Activated T-helper 2 cell treated with anti-CD3 and anti-CD28 coated beads, Interferon-gamma antibody, Interleukin-2, Interleukin-4, amounts not matched to agents 10 μg/mL and 5 μg/mL and 100 μg/mL, durations not matched to agents 14 hours and 24 hours and 36 hours (primary cell): ENCODE measurements at regions of chr3 and their contacts with region 1.

Region 1: DNA sequence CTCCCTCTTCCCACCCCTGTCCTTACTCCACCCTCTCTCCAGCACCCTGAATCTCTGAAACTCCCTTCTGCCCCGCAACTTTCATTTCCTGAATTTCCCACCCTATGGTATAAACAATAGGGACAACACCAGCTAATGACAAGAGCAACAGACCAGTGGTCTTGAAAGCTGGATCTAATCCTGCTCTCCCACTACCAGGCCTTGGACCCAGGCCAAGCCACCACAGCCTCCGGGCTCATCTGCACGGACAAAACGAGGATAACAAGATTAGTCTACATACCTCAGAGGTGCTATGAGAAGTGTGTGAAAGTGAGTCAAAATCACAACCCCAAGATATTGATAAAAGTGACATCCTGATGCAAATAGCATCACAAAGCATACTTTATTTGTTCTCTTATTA is 128.6 kb downstream of the ERC2 start:
- DNase-seq: no peak
- H3K4me3 Mint-ChIP-seq: no peak overlapping the region
- H3K27ac Mint-ChIP-seq: no peak overlapping the region
- H3K4me1 Mint-ChIP-seq: no peaks in the 10 kb centered on the region
- H3K27me3 Mint-ChIP-seq: peaks cover 10% of the 10 kb centered on the region

Region 2: DNA sequence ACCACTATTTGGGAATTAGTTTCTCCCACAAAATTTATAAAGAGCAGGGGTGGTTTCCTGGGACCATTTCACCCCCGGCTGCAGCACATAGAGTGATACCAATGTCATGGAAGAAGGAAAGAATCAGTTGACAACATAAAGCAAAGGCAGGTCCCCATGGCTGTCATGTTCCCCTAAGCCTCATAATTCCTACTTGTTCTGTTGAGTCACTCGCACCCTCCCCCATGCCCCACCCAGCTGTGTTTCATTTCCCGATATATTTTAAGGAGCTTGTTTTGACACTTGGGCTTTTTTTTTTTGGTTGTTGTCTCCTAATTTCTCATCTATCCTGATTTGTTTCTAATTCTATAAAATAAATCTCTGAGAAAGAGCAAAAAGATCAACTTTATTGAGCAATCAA is 103.7 kb after region 1 on chr3:
- intact Hi-C with region 1: loop called (anchors 2 kb)
- DNase-seq: no peak
- H3K4me3 Mint-ChIP-seq: no peak overlapping the region
- H3K27ac Mint-ChIP-seq: no peak overlapping the region
- H3K4me1 Mint-ChIP-seq: peaks cover 1% of the 10 kb centered on the region
- H3K27me3 Mint-ChIP-seq: peaks cover 1% of the 10 kb centered on the region